Activated naive CD4-positive, alpha-beta T cell treated with anti-CD3 and anti-CD28 coated beads, Interleukin-2, amount 10 ng/mL, durations not matched to agents 7 days and 5 days (primary cell): ENCODE measurements at regions of chr17 and their contacts with region 1.

Region 1: GRCh38 chr17:58317421-58318064 is 11.1 kb downstream of the TSPOAP1 start:
- DNase-seq: peak; percentile 79
- H3K4me3 Mint-ChIP-seq: no peak overlapping the region
- H3K27ac Mint-ChIP-seq: peak overlapping the region; percentile 75
- H3K4me1 Mint-ChIP-seq: peaks cover 13% of the 10 kb centered on the region
- H3K27me3 Mint-ChIP-seq: no peaks in the 10 kb centered on the region

Region 2: DNA sequence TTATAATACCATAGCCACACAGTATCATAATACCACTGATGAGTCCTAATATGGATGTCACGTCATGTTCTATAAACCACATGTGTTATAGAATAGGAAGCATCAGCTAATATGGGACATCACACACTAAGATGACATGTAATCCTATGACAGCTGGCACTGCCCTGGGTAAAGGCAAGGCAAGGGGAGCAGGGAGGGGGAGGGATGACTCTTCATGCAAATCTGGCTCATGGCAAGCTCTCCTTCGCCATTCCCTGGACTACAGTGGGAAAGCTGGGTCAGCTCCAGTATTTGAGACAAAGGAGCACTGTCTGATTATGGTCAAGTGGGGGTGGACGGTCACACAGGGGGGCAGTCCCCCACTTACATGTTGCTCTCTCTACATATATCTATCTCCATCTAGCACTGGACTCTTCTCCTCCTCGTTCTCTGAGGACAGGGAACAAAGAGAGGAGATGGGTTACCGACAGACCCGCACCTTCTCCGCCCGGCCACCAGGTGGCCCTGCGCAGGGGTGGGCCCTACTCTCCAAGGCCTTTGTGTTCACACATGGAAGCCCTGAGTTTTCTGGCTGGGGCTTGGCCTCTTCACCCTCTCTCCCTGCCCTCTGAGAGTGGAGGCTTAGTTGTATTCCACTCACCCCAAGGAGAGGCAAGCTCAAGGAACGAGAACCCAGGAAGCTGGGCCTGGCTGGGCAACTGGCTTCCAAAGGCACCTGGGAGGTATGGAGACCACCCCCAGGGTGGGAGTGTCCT is 13.4 kb before region 1 on chr17:
- CTCF ChIA-PET with region 1: interaction called, 23 read pairs
- DNase-seq: peak; percentile 72
- H3K4me3 Mint-ChIP-seq: no peak overlapping the region
- H3K27ac Mint-ChIP-seq: no peak overlapping the region
- H3K4me1 Mint-ChIP-seq: no peaks in the 10 kb centered on the region
- H3K27me3 Mint-ChIP-seq: no peaks in the 10 kb centered on the region

Region 3: DNA sequence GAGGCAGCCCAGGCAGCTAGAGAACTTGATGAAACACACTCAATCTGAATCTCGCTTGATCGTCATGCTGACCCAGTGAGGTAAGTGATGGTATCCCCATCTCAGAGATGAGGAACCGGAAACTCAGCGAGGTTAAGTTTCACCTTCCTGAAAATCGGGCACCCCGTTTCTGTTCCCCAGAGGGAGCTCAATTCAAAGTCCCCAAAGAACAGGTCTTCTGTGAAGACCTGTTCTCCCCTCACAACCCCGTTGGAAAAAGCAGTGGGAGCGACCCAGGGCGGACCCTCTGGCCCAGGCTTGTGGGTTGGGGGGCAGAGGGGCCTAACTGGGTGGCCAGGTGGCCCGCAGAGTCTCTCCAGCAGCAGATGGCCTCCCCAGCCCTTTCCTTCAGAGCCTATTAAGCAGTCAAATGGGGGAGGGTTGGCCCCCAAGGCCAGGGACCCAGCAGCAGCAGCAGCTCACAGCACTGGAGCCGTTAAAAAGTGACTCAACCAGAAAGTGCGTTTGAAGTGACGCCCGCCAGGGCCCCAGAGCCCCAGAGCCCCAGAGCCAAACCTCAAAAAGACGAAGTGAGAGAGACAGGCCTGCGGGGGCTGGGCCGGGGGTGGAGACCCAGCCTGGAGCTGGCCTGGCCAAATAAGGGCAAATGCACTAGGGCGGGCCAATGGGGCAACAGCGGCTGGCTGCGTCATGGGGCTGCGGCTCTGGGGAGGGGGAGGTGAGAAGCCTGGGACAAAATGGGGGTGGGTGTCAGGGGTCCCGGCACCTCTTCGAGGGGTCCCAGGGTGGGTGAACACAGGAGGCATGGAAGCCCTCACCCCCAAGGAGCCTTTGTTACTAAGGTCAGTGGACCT is 20.3 kb after region 1 on chr17:
- CTCF ChIA-PET with region 1: interaction called, 11 read pairs
- DNase-seq: peak; percentile 96
- H3K4me3 Mint-ChIP-seq: peak overlapping the region; percentile 99
- H3K27ac Mint-ChIP-seq: peak overlapping the region; percentile 99
- H3K4me1 Mint-ChIP-seq: peaks cover 44% of the 10 kb centered on the region
- H3K27me3 Mint-ChIP-seq: no peaks in the 10 kb centered on the region

Region 4: GRCh38 chr17:58352014-58352842 is 34.7 kb after region 1 on chr17 and contains the start of gene SUPT4H1:
- CTCF ChIA-PET with region 1: interaction called, 35 read pairs
- DNase-seq: peak; percentile 91
- H3K4me3 Mint-ChIP-seq: peak within 1 kb of the TSS; percentile 100
- H3K27ac Mint-ChIP-seq: peak within 1 kb of the TSS; percentile 98
- H3K4me1 Mint-ChIP-seq: peaks cover 61% of the 10 kb centered on the region
- H3K27me3 Mint-ChIP-seq: no peaks in the 10 kb centered on the region

Region 5: GRCh38 chr17:58432806-58433572 is 115.4 kb after region 1 on chr17:
- CTCF ChIA-PET with region 1: interaction called, 10 read pairs
- DNase-seq: no peak
- H3K4me3 Mint-ChIP-seq: no peak overlapping the region
- H3K27ac Mint-ChIP-seq: no peak overlapping the region
- H3K4me1 Mint-ChIP-seq: no peaks in the 10 kb centered on the region
- H3K27me3 Mint-ChIP-seq: no peaks in the 10 kb centered on the region